Astrocyte of the cerebellum (primary cell): ENCODE measurements at regions of chr9 and their contacts with region 1.

Region 1: GRCh38 chr9:98287383-98287782 is 31.9 kb upstream of the TBC1D2 start:
- DNase-seq: no peak
- H3K4me3 ChIP-seq: no peak overlapping the region
- CTCF ChIP-seq: no peak

Region 2: DNA sequence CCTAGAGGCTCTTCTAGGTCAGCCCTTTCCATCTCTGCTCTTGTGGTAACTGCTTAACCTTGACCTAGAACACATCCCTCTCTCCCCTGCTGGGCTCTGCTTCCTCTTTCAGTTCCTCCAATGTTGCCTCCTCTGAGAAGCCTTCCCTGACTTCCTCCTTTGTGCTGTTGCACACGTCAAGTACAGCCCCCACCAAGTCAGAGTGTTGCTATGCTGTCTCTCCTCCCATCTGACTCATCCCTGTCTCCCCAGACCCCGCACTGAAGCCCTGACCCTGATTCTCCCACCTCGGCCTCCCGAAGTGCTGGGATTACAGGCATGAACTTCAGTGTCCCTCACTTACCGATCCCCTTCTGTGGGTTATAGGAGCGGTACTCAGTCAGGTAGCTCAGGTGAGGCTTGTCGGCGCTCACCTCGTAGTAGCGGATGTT is 157.9 kb before region 1 on chr9:
- in situ Hi-C with region 1: loop called (anchors 10 kb)
- DNase-seq: no peak
- H3K4me3 ChIP-seq: no peak overlapping the region
- CTCF ChIP-seq: no peak

Region 3: DNA sequence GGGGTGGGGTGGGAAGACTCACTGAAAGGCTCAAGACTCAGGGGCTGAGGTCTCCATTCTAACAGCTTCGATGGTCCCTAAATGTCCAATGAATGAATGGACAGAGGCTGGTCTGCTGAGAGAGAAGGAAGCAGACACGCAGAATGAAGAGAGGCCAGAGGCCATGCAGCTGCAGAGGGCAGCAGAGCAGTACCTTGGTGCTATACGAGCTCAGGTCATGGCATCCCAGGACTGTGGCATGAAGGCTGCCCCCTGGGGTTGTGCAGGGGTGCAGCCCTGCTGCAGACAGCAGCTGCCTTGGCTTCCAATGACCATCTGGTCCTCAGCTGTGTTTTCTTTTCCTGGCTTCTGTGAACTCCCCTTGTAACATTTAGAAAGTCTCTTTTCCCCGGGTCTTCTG is 79.8 kb before region 1 on chr9:
- in situ Hi-C with region 1: loop called (anchors 10 kb)
- DNase-seq: no peak
- H3K4me3 ChIP-seq: no peak overlapping the region
- CTCF ChIP-seq: no peak

Region 4: GRCh38 chr9:98248737-98249474 is 38.5 kb before region 1 on chr9:
- in situ Hi-C with region 1: no loop called
- DNase-seq: peak; percentile 26
- H3K4me3 ChIP-seq: no peak overlapping the region
- CTCF ChIP-seq: no peak